Spleen (tissue), 13 donors: ENCODE measurements at regions of chr6 and their contacts with region 1.

Region 1: DNA sequence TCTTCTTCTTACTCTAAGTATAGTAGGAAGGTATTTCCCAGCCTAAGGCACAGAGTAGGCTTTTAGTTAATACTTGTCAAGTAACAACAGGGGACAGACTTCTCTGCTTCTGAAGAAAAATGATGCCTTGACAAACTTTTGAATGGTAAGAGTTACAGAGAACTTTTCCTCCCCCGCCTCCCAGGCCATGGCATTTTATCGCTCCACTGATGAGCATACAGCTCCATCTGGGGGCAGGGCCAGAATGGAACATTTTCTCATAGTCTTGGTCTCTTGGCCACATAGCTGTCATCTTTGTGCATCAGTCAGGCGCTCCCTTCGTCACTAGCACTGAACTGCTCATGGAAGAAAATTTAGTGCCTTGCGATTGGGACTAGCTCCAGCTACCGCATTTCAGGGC is 1066.8 kb upstream of the CITED2 start:
- DNase-seq: peak; percentile 73
- H3K4me3 ChIP-seq: no peak overlapping the region
- H3K27ac ChIP-seq: peak overlapping the region in 2 of 8 donors; percentile 19 to 24
- H3K4me1 ChIP-seq: peaks cover 0 to 15% (median 0%) of the 10 kb centered on the region in 6 donors
- H3K27me3 ChIP-seq: no peaks in the 10 kb centered on the region
- CTCF ChIP-seq: peak in 9 of 11 experiments; percentile 7 to 61 (median 44)
- POLR2A ChIP-seq: no peak

Region 2: DNA sequence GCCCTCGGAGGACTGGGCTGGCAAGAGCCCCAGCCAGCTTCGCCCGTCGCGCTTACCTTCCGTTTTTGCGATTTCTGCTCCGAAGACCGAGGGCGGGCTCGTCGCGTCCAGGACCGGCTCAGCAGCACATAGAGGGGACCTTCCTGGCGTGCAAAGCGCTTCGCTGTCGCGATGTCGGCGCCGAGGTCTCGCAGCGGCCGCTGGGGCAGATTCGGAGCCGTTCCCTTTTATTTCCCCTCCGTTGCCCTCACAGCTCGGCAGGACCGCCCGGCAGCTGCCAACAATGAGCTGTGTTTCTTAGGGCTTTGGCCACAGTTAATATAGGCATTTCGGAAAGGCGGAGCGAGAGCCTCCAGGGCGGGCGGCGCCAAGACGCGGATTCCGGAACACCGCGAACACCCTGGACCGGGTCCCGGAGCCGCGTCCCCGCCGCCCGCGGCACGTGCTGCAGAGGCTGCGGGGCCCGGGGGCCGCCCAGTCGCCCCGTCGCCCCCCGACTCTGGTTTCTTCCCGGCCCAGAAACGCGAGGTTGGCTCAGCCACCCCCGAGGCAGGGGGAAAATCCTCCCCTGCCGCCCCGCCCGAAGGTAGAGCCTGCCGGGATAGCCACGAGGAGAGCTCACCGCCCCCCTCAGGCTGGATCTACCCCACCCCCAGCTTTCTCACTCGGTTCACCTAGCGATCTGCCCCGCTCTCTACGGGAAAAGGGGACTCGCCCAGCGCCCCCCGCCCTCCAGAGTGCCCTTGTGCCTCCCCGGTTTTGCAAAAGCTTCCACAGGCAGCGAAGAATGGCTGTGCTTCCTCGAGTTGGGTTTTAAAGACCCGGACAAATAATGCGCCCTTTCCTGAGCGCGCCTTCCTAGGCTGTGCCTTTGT is 1066.7 kb before region 1 on chr6 and contains the start of gene CITED2:
- intact Hi-C with region 1: loop called (anchors 5 kb)
- DNase-seq: peak; percentile 97
- H3K4me3 ChIP-seq: peak within 1 kb of the TSS; percentile 73 to 95 (median 88)
- H3K27ac ChIP-seq: peak within 1 kb of the TSS; percentile 95 to 99 (median 98)
- H3K4me1 ChIP-seq: peaks cover 17 to 51% (median 36%) of the 10 kb centered on the region in 6 donors
- H3K27me3 ChIP-seq: no peaks in the 10 kb centered on the region
- CTCF ChIP-seq: peak in 8 of 11 experiments; percentile 21 to 51 (median 30)
- POLR2A ChIP-seq: peak; percentile 97 to 99 (median 97)
- total RNA-seq, gene CITED2: 63.5 to 213 (median 172) TPM

Region 3: DNA sequence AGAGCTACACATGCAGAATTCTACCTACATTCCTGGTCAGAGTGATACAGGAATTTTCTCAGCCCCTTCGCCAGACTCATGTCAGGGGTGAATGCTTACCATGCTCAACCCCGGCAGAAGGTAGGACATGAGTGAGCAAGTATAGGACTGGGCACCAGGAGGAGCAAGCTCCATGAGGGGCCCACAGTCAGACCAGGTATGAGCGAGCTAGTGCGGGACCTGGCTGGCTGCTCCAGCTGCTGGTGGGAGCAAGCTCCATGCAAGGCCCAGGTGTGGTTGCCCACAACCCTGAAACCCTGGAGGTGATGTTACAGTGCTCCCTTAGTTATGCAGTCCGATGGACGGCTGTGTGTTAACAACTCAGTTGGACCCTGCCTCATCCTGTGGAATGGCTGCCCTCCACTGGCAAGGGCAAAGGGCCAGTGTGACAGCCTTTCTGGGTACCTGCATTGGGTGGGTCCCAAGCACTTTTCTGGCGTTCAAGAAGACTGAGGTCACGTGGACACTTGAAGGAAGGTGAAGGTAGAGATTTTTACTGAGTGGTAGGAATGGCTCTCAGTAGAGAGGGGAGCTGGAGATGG is 563.3 kb before region 1 on chr6:
- intact Hi-C with region 1: loop called (anchors 10 kb)
- DNase-seq: no peak
- H3K4me3 ChIP-seq: no peak overlapping the region
- H3K27ac ChIP-seq: no peak overlapping the region
- H3K4me1 ChIP-seq: peaks cover 7 to 17% (median 13%) of the 10 kb centered on the region in 6 donors
- H3K27me3 ChIP-seq: no peaks in the 10 kb centered on the region
- CTCF ChIP-seq: no peak
- POLR2A ChIP-seq: no peak